ENCODE measurements at regions of chr18 and their contacts with region 1.

Region 1: GRCh38 chr18:8704361-8705279 is 736 bp upstream of the MTCL1 start:
- DNase-seq: peak; percentile 59 to 91 (median 84)
- ATAC-seq: peak; percentile 95
- H3K4me3 ChIP-seq: peak overlapping the region; percentile 73
- H3K4me3 Mint-ChIP-seq: peak overlapping the region; percentile 89
- H3K27ac ChIP-seq: no peak overlapping the region
- H3K27ac Mint-ChIP-seq: no peak overlapping the region
- H3K4me1 ChIP-seq: peaks cover 15% of the 10 kb centered on the region
- H3K4me1 Mint-ChIP-seq: peaks cover 17% of the 10 kb centered on the region
- H3K27me3 ChIP-seq: peaks cover 16 to 24% of the 10 kb centered on the region in 2 experiments
- H3K27me3 Mint-ChIP-seq: peaks cover 62% of the 10 kb centered on the region
- CTCF ChIP-seq: no peak

Region 2: GRCh38 chr18:8608795-8609658 is 95.6 kb before region 1 on chr18 and contains the start of gene RAB12:
- CTCF ChIA-PET with region 1: no interaction called
- POLR2A ChIA-PET with region 1: no interaction called
- intact Hi-C with region 1: loop called (anchors 1 to 2 kb)
- DNase-seq: peak; percentile 72 to 93 (median 88)
- ATAC-seq: peak; percentile 92
- H3K4me3 ChIP-seq: peak within 1 kb of the TSS; percentile 64 to 70
- H3K4me3 Mint-ChIP-seq: peak within 1 kb of the TSS; percentile 90
- H3K27ac ChIP-seq: peak within 1 kb of the TSS; percentile 53 to 70
- H3K27ac Mint-ChIP-seq: peak within 1 kb of the TSS; percentile 90
- H3K4me1 ChIP-seq: peaks cover 42% of the 10 kb centered on the region
- H3K4me1 Mint-ChIP-seq: peaks cover 50% of the 10 kb centered on the region
- H3K27me3 ChIP-seq: no peaks in the 10 kb centered on the region
- H3K27me3 Mint-ChIP-seq: no peaks in the 10 kb centered on the region
- CTCF ChIP-seq: peak; percentile 70
- total RNA-seq, gene RAB12: 20.2 to 20.9 TPM

Region 3: GRCh38 chr18:8754995-8755955 is 50.7 kb after region 1 on chr18:
- CTCF ChIA-PET with region 1: no interaction called
- POLR2A ChIA-PET with region 1: no interaction called
- intact Hi-C with region 1: loop called (anchors 2 kb)
- DNase-seq: peak in 8 of 9 experiments; percentile 28 to 83 (median 56)
- ATAC-seq: peak; percentile 98
- H3K4me3 ChIP-seq: peak overlapping the region in 1 of 2 experiments; percentile 5
- H3K4me3 Mint-ChIP-seq: peak overlapping the region; percentile 77
- H3K27ac ChIP-seq: no peak overlapping the region
- H3K27ac Mint-ChIP-seq: peak overlapping the region; percentile 25
- H3K4me1 ChIP-seq: peaks cover 31% of the 10 kb centered on the region
- H3K4me1 Mint-ChIP-seq: peaks cover 31% of the 10 kb centered on the region
- H3K27me3 ChIP-seq: no peaks in the 10 kb centered on the region
- H3K27me3 Mint-ChIP-seq: peaks cover 16% of the 10 kb centered on the region
- CTCF ChIP-seq: no peak

Region 4: DNA sequence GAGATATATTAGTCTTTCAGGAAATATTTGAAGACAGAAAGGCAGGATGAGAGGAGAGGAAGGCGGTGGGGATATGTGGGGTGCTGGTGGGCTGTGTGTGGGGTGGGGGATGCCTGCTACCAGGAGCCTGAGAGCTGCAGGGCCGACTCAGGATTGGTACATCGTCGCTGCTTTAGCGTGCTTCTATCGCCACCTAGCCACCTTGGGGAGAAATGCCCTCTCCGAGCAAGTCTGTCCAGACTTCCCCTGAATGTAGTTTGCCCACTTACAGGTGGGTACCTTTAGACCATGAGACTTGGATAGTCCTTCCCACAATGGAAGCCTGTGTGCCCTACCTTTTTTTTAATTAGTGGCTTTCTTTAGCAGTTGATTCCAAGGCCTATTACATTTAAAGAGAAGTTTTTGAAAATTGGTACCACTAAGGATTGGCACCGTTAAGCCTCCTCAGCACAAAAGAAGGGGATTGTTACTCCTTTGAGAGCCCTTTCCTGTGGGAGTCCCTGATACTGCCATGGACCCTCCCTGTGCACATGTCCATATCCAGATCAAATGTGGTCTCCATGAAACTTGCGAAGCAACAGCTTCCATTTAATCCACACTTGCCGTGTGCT is 283.7 kb after region 1 on chr18:
- CTCF ChIA-PET with region 1: interaction called, 10 read pairs
- POLR2A ChIA-PET with region 1: no interaction called
- intact Hi-C with region 1: no loop called
- DNase-seq: peak; percentile 4 to 73 (median 58)
- ATAC-seq: peak; percentile 71
- H3K4me3 ChIP-seq: no peak overlapping the region
- H3K4me3 Mint-ChIP-seq: no peak overlapping the region
- H3K27ac ChIP-seq: no peak overlapping the region
- H3K27ac Mint-ChIP-seq: no peak overlapping the region
- H3K4me1 ChIP-seq: no peaks in the 10 kb centered on the region
- H3K4me1 Mint-ChIP-seq: no peaks in the 10 kb centered on the region
- H3K27me3 ChIP-seq: no peaks in the 10 kb centered on the region
- H3K27me3 Mint-ChIP-seq: peaks cover 20% of the 10 kb centered on the region
- CTCF ChIP-seq: peak; percentile 87

Region 5: DNA sequence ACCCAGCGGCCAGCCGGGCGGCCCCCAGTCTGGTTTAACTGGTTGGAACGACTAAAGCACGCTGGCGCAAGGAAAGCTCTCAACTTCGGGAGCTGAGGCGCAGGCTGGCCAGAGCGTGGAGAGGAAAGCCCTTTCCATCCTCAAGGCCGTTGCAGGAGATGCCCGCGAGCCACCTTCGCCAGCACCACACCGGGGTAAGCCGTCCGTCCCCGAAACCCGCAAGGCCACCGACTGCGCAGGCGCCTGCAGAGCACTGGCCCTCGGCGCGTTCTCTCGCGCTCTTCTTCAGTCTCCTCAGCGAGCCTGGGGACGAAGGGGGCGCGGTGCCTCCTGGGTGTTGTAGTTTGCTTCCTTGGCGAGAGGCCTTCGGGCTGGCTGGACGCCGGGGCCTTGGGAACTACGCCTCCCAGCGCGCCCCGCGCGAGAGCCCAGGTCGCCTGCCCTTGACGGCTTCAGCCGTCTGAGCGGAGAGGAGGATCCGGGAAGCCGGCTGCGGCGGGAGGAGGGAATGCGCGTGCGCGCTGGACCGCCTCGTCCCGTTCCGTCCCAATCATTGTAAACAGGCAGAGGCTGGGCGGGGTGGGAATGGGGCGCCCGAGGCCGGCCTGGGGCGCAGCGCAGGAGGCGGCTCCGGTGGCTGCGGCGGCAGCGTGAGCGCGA is 770.5 kb after region 1 on chr18 and contains the start of gene RALBP1:
- CTCF ChIA-PET with region 1: no interaction called
- POLR2A ChIA-PET with region 1: no interaction called
- intact Hi-C with region 1: loop called (anchors 1 to 5 kb)
- DNase-seq: peak; percentile 96 to 99 (median 97)
- ATAC-seq: peak; percentile 98
- H3K4me3 ChIP-seq: peak within 1 kb of the TSS; percentile 90 to 93
- H3K4me3 Mint-ChIP-seq: peak within 1 kb of the TSS; percentile 98
- H3K27ac ChIP-seq: peak within 1 kb of the TSS; percentile 67 to 86
- H3K27ac Mint-ChIP-seq: peak within 1 kb of the TSS; percentile 97
- H3K4me1 ChIP-seq: peaks cover 9% of the 10 kb centered on the region
- H3K4me1 Mint-ChIP-seq: peaks cover 38% of the 10 kb centered on the region
- H3K27me3 ChIP-seq: no peaks in the 10 kb centered on the region
- H3K27me3 Mint-ChIP-seq: peaks cover 5% of the 10 kb centered on the region
- CTCF ChIP-seq: no peak
- total RNA-seq, gene RALBP1: 5.4 to 7.9 TPM